Heart left ventricle (tissue), 16 donors: ENCODE measurements at regions of chr2 and their contacts with region 1.

Region 1: DNA sequence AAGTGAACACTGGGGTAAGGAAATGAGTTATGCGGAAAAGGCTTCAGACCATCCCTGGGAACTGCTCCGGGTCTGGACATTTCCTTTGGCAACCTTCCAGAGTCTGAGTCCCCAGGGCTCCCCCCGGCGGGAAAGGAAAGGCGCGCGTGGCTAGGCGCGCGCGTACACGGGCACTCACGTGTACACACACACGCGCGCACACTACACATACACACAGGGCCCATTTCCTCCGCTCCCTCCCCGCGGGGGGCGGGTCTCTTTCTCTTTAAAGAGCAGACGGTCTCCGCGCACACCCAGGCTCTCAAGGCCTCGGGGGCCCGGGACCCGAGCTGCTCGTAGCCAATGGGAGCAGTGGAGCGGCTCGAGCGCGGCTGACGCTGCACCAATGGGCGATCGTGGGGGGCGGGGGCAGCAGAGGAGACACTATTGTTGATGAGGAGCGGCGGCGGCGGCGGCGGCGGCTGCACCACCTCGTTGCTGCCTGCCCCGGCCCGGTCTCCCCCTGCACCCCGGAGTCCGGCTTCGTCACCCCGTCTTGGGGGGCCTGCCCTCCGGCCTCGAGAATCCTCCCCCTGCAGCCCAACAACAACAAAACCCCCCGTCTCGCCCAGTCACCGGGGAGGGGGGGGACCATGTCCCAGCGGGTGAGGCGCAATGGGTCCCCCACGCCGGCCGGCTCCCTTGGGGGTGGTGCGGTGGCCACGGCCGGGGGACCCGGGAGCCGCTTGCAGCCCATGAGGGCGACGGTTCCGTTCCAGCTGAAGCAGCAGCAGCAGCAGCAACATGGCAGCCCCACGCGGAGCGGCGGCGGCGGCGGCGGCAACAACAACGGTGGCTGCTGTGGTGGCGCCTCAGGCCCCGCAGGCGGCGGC is at the start of gene FAM117B:
- DNase-seq: peak; percentile 98 to 100 (median 99)
- ATAC-seq: peak; percentile 99
- H3K4me3 ChIP-seq: peak within 1 kb of the TSS; percentile 72 to 99 (median 96)
- H3K27ac ChIP-seq: peak within 1 kb of the TSS; percentile 60 to 96 (median 90)
- H3K4me1 ChIP-seq: peaks cover 0 to 27% (median 14%) of the 10 kb centered on the region in 12 donors
- H3K27me3 ChIP-seq: no peaks in the 10 kb centered on the region
- CTCF ChIP-seq: peak in 1 of 12 donors; percentile 13
- POLR2A ChIP-seq: peak in 1 of 2 donors; percentile 85
- total RNA-seq, gene FAM117B: 0.88 to 6.1 (median 2.9) TPM

Region 2: DNA sequence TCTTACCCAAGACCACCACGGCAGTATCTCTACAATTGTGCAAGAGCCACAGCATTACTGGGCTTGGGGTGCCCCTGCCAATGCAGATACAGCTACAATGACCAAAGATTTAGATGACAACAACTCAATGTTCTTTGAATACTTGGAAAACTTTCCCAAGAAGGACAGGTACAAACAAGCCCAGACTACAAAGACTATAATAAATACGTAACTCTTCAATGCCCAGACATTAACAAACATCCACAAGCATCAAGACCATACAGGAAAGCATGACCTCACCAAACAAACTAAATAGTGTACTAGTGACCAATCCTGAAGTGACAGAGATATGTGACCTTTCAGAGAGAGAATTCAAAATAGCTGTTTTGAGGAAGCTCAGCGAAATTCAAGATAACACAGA is 174.0 kb after region 1 on chr2:
- intact Hi-C with region 1: loop called in 2 of 10 experiments (anchors 5 kb)
- DNase-seq: no peak
- ATAC-seq: no peak
- H3K4me3 ChIP-seq: no peak overlapping the region
- H3K27ac ChIP-seq: no peak overlapping the region
- H3K4me1 ChIP-seq: peaks cover 0 to 21% (median 10%) of the 10 kb centered on the region in 12 donors
- H3K27me3 ChIP-seq: no peaks in the 10 kb centered on the region
- CTCF ChIP-seq: no peak
- POLR2A ChIP-seq: no peak

Region 3: GRCh38 chr2:203014456-203015199 is 379.8 kb after region 1 on chr2 and contains the start of gene NBEAL1:
- intact Hi-C with region 1: loop called in 1 of 10 experiments (anchors 10 kb)
- DNase-seq: peak; percentile 98 to 99 (median 98)
- ATAC-seq: peak; percentile 98
- H3K4me3 ChIP-seq: peak within 1 kb of the TSS; percentile 78 to 94 (median 87)
- H3K27ac ChIP-seq: peak within 1 kb of the TSS; percentile 90 to 99 (median 95)
- H3K4me1 ChIP-seq: peaks cover 0 to 46% (median 21%) of the 10 kb centered on the region in 12 donors
- H3K27me3 ChIP-seq: no peaks in the 10 kb centered on the region
- CTCF ChIP-seq: no peak
- POLR2A ChIP-seq: peak in 1 of 2 donors; percentile 71
- total RNA-seq, gene NBEAL1: 14.7 to 26.9 (median 18.9) TPM

Region 4: GRCh38 chr2:203993560-203993959 is 1358.8 kb after region 1 on chr2:
- intact Hi-C with region 1: no loop called
- DNase-seq: no peak
- ATAC-seq: no peak
- H3K4me3 ChIP-seq: no peak overlapping the region
- H3K27ac ChIP-seq: no peak overlapping the region
- H3K4me1 ChIP-seq: peaks cover 0 to 42% (median 0%) of the 10 kb centered on the region in 12 donors
- H3K27me3 ChIP-seq: no peaks in the 10 kb centered on the region
- CTCF ChIP-seq: no peak
- POLR2A ChIP-seq: no peak